ENCODE measurements at regions of chr5 and their contacts with region 1.

Region 1: DNA sequence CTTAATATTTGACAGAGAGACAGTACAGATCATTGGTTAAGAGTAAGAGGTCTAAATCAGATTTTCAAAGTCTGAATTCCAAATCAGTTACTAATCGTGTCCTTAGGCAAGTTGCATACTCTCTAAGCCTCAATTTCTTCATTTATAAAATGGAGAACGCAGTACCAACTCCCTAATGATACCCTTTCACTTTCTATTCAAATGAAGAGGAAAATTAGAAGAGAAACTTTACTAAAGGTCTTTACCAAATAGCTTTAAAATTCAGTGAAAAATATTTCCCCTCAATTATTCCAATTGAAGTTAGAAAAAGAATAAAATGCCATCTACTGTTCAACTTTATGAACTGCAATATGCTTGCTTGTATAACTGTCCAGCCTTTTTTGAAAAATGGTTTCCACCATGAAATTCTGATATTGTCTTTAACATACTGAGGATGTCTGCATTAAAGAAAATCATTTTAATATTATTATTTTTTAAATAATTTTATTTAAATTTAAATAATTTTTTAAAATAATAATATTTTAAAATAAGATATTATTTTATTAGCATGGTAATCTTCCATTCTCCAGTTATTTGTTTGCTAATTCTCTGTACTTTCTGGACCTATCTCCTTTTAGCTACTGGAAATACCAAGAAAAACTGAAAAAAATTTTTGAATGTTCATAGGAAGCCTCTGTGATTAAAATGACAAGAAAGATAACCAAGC is 36.0 kb downstream of the POC5 start:
- DNase-seq: peak; percentile 62
- H3K4me3 ChIP-seq: no peak overlapping the region
- H3K27ac ChIP-seq: no peak overlapping the region
- H3K4me1 ChIP-seq: no peaks in the 10 kb centered on the region
- H3K27me3 ChIP-seq: no peaks in the 10 kb centered on the region
- CTCF ChIP-seq: peak; percentile 69

Region 2: DNA sequence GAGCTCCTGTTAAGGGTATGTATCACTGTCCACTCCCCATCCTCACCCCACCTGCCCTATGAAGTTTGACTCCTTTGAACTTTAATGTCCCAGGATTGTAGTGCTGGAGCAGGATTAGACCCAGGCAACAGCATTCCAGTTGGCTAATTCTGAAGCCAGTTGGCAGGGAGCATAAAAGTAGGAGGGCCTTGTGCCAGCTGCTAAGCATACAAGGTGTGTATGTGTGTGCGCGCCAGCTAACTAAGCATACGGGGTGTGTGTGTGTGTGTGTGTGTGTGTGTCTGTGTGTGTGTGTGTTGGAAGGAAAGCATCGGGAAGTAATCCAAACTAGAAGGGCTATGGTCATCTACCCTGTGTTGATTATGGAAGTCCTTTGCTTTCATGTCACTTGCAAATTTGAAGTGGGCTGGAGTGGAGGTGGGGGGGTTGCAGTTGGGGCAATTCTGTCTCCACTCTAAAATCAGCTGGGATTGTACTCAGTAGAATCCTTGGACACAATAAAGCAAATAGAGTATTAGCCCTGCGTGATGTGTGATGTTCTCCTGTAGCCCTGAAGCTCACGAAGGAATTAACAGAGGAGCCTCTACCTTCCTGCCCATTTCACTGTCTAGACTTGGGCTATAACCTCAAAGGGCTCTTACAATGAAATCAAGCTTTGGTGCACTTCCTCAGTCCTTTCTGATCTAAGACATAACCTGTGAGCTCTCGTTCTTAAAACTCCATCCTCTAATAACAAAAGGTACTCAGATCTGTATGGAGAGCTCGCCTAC is 317.4 kb before region 1 on chr5:
- CTCF ChIA-PET with region 1: no interaction called
- POLR2A ChIA-PET with region 1: no interaction called
- intact Hi-C with region 1: loop called (anchors 10 kb)
- DNase-seq: no peak
- H3K4me3 ChIP-seq: no peak overlapping the region
- H3K27ac ChIP-seq: no peak overlapping the region
- H3K4me1 ChIP-seq: no peaks in the 10 kb centered on the region
- H3K27me3 ChIP-seq: no peaks in the 10 kb centered on the region
- CTCF ChIP-seq: no peak